ENCODE measurements at regions of chr5 and their contacts with region 1.

Region 1: GRCh38 chr5:107232788-107233187 is 437.9 kb downstream of the EFNA5 start:
- DNase-seq: no peak
- CTCF ChIP-seq: no peak

Region 2: DNA sequence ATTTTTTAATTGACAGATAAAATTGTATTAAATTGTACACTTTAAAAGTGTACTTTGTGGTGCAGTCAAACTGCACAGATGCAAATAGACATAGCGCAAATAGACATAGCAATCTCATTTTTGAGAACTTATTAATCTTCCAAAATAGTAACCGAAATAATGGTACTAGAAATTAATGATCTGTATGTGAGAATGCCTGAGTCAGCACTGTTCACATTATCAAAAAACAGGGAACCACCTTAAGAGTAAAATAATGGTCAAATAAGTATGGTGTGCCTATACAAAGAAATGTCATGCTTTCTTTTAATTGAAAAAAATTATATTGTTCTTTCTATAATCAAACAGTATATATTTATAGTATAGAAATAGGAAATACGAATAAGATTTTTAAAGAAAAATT is 23.9 kb before region 1 on chr5:
- CTCF ChIA-PET with region 1: no interaction called
- POLR2A ChIA-PET with region 1: no interaction called
- DNase-seq: no peak
- CTCF ChIP-seq: no peak

Region 3: DNA sequence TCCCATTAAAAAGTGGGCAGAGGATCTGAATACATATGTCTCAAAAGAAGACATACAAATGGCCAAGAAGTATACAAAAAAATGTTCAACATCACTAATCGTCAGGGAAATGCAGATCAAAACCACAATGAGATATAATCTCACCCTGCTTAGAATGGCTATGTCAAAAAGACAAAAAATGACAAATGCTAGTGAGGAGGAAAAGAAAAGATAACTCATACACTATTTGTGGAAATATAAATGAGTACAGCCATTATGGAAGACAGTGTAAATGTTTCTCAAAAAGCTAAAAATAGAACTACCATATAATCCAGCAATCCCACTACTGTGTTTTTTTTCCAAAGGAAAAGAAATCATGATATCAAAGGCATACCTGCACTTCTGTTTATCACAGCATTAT is 12.8 kb before region 1 on chr5:
- CTCF ChIA-PET with region 1: interaction called, 10 read pairs
- POLR2A ChIA-PET with region 1: no interaction called
- DNase-seq: no peak
- CTCF ChIP-seq: no peak

Region 4: DNA sequence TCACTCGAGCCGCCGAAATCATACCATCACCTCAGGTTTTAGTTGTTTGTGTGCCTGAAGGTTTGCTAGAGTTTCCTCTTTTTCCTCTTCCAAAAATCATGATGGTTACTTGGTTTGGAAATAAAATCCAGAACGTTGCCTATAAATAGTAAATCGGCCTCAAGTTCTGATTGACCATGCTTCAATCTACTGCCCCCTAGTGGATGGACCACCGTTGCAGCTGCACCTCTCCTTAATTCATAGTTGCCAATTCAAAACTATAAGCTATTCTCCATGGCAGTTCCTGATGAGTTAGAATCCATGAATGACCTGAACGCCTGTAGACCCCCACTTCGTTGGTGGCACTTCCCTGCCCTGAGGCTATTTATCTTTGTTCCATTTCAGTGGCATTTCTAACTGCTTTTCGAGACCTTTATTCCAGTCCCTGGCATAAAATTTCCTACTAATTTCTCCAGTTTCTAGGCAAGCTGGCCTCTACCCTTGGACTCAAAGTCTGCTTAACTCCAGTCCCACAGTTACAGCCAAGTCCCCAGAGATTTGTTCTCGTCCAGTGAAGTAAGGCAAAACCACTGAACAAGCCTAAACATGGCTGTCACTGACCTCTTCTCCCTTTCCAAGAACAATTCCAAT is 15.4 kb after region 1 on chr5:
- CTCF ChIA-PET with region 1: interaction called, 41 read pairs
- POLR2A ChIA-PET with region 1: no interaction called
- DNase-seq: peak; percentile 32
- CTCF ChIP-seq: peak; percentile 67

Region 5: DNA sequence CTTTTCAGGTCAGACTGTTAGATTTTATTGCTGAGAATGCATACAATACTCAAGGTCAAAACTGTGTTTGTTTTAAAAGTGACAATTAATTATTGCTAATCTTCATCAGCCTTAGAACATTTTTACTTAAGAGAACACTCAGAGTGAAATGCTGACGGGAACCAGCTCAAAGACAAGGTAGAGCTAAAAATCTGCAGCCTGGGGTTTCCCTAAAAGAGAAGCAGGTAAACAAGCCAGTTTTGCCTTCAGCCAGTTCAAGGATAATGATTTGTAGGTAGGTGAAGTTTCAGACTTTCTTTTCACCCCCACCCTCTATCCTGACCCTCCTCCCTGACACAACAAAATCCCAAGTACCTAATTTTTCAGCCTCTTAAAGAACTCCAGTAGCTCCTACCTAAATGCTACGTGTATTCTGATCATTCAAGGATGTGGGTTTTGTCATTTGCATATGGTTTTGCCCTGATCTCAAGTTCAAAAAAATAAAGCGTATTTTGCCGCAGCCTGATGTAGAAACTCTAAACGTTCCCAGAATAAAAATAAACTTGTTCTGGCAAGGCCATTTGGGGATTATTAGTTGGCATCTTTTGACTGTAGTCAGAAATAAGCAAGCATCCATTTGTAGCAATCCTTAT is 30.7 kb after region 1 on chr5:
- CTCF ChIA-PET with region 1: no interaction called
- POLR2A ChIA-PET with region 1: no interaction called
- DNase-seq: peak; percentile 18
- CTCF ChIP-seq: no peak

Measured in GM10248 (cell line).